ENCODE measurements at regions of chr20 and their contacts with region 1.

Region 1: GRCh38 chr20:39880887-39881286 is 808.1 kb downstream of the MAFB start:
- DNase-seq: no peak
- H3K4me3 ChIP-seq: no peak overlapping the region
- CTCF ChIP-seq: no peak

Region 2: GRCh38 chr20:39784693-39785092 is 96.2 kb before region 1 on chr20:
- in situ Hi-C with region 1: loop called (anchors 5 kb)
- DNase-seq: no peak
- H3K4me3 ChIP-seq: no peak overlapping the region
- CTCF ChIP-seq: no peak

Region 3: DNA sequence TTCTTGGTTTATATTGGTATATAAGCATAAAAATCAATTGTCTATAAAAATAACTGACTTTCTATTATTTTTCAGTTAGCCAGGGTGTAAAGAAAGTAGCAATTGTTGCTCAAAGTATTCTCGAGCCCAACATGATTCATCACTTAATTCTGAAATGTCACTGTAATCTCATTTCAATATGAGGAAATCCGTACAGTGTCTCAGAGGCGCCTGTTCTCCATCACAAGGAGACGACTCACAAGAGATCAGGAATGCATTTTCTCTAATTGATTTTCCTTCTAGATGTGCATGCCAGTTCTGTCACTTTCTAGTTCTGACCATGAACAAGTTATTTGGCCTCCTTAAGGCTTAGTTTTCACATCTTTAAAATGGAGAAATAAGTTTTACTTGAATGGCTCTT is 55.0 kb after region 1 on chr20:
- in situ Hi-C with region 1: no loop called
- DNase-seq: no peak
- H3K4me3 ChIP-seq: no peak overlapping the region
- CTCF ChIP-seq: no peak